Gastrocnemius medialis (tissue), 4 donors: ENCODE measurements at regions of chr14 and their contacts with region 1.

Region 1: GRCh38 chr14:104723648-104724406 is at the start of gene ADSS1:
- DNase-seq: peak; percentile 58 to 79
- ATAC-seq: peak; percentile 38 to 52
- H3K4me3 ChIP-seq: peak within 1 kb of the TSS; percentile 67 to 89 (median 74)
- H3K27ac ChIP-seq: peak within 1 kb of the TSS; percentile 94 to 99 (median 96)
- H3K4me1 ChIP-seq: peaks cover 59 to 70% of the 10 kb centered on the region in 2 donors
- H3K27me3 ChIP-seq: no peaks in the 10 kb centered on the region
- CTCF ChIP-seq: peak; percentile 95 to 100 (median 98)
- POLR2A ChIP-seq: peak; percentile 67 to 83
- total RNA-seq, gene ADSS1: 165 to 577 (median 232) TPM

Region 2: DNA sequence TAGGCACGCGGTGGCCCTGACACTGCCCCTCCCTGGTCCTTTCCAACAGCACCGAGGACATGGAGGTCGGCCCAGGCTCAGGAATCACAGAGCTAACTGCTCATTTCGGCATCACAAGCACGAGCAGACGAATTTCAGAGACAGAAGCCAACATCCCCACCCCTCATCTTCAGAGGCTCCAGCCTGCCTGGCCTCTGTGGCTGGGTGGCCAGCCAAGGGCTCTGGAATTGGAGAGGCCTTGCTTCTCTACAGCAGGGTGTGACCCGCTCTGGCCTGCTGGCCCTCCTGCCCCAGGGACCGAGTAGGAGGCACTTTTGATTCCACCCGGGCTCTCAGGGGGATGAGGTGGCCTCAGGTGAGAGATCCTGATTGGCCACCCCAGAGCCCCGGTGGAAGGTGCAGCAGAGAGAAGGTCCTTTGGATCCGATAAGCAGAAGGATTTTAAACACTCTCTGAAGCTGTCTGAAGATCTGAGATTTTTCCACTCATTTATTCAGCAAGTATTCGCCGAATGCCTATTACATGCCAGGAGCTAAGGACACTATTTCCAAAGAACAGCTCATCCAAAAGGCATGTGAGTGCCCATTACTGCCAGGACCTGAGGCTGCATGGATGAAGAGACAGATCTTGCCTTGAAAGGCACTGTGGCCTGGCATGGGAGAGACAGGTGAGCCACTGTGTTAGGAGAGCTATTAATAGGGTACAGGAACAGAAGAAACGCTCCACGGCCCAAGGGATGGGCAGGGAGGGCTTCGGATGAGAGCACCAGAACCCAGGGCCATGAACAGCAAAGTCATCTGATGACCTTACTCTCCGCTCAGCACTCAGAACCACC is 1171.6 kb before region 1 on chr14:
- in situ Hi-C with region 1: no loop called
- intact Hi-C with region 1: loop called (anchors 10 kb)
- DNase-seq: peak; percentile 55 to 83
- ATAC-seq: peak; percentile 65 to 72
- H3K4me3 ChIP-seq: peak overlapping the region in 1 of 4 donors; percentile 40
- H3K27ac ChIP-seq: peak overlapping the region; percentile 74 to 97 (median 86)
- H3K4me1 ChIP-seq: peaks cover 46 to 74% of the 10 kb centered on the region in 2 donors
- H3K27me3 ChIP-seq: no peaks in the 10 kb centered on the region
- CTCF ChIP-seq: no peak
- POLR2A ChIP-seq: no peak

Region 3: DNA sequence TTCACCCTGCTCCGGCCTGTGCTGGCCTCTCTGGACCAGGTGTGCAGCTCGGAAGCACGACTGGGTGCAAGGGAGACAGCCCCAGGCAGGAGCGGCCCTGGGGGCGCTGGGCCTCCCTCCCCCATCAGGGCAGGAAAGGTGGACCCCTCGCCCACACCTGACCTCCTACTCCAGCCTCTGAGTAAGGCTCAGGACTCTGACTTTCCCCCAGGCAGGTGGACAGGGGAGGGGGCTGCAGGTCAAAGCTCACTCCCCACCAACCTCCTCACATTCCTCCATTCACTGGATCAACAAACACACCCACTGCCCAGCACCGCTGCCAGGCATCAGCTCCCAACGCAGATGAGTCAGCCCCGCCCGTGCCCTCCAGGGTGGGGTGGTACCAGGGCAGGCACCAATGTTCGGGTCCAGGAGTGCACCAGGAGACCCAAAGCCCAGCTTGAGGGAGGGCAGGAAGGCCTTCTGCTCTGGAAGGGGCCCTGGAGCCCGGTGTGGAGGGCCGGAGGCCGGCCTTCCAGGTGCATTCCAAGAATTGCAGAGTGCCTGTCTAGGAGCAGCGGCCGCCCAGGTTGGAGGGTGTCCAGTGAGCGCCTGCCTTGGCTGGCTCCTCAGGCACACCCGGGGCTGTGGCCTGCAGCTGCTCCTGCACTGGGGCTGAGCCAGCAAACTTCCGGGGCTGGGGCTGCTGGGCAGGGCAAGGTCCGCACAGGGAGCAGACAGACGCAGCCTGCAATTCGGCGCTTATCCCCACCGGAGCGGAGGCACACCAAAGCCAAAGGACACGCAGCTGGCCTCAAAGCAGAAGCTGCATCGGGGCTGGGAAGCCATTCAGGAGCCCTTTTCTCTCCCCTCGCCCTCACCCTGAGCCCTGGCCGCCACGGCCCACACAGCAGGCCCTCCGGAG is 36.0 kb before region 1 on chr14:
- in situ Hi-C with region 1: no loop called
- intact Hi-C with region 1: loop called (anchors 1 kb)
- DNase-seq: peak; percentile 88 to 94
- ATAC-seq: peak; percentile 73 to 81
- H3K4me3 ChIP-seq: peak overlapping the region; percentile 54 to 86 (median 64)
- H3K27ac ChIP-seq: peak overlapping the region; percentile 80 to 87 (median 84)
- H3K4me1 ChIP-seq: peaks cover 29 to 36% of the 10 kb centered on the region in 2 donors
- H3K27me3 ChIP-seq: no peaks in the 10 kb centered on the region
- CTCF ChIP-seq: no peak
- POLR2A ChIP-seq: peak; percentile 42 to 53

Region 4: GRCh38 chr14:104735830-104736642 is 12.2 kb after region 1 on chr14:
- in situ Hi-C with region 1: no loop called
- intact Hi-C with region 1: loop called (anchors 1 kb)
- DNase-seq: peak; percentile 96 to 99
- ATAC-seq: peak; percentile 69 to 78
- H3K4me3 ChIP-seq: peak overlapping the region in 1 of 4 donors; percentile 6
- H3K27ac ChIP-seq: peak overlapping the region; percentile 91 to 96 (median 95)
- H3K4me1 ChIP-seq: peaks cover 63 to 65% of the 10 kb centered on the region in 2 donors
- H3K27me3 ChIP-seq: no peaks in the 10 kb centered on the region
- CTCF ChIP-seq: no peak
- POLR2A ChIP-seq: peak; percentile 51 to 77

Region 5: DNA sequence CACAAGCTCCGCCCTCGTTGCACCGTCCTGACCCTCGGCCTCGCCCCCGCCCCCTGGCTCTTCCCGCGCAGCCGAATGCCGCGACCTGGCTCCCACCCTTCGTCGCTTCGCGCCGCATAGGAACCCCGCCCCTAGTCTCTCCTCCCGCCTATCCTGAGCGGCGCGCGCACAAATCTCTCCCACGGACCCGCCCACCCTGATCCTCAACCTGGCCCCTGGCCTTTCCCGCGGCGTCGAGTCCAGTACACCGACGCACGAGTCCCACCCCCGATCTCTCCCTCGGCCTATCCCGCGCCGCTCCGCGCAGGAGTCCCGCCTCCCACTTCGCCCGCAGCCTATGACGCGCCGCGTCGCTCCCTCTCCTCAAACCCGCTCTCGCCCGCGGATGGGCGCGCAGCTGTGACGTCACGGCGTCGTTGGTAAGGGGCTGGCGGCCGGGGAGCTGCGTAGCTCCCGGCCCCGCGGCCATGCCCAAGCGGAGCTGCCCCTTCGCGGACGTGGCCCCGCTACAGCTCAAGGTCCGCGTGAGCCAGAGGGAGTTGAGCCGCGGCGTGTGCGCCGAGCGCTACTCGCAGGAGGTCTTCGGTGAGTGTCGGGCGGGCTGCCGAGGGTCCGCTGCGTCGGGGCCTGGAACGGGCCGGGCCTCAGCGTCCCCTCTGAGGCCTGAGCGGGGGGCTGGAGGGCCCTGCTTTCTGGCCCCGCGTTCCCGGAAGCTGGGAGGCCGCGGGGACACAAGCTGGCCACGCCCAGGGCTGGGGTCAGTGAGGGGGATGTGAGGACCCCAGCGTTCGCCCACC is 29.1 kb after region 1 on chr14 and contains the start of gene SIVA1:
- in situ Hi-C with region 1: no loop called
- intact Hi-C with region 1: loop called (anchors 1 kb)
- DNase-seq: peak; percentile 99
- ATAC-seq: peak; percentile 79 to 84
- H3K4me3 ChIP-seq: peak within 1 kb of the TSS; percentile 84 to 98 (median 92)
- H3K27ac ChIP-seq: peak within 1 kb of the TSS; percentile 90 to 99 (median 94)
- H3K4me1 ChIP-seq: peaks cover 44 to 47% of the 10 kb centered on the region in 2 donors
- H3K27me3 ChIP-seq: no peaks in the 10 kb centered on the region
- CTCF ChIP-seq: peak in 1 of 5 experiments; percentile 33
- POLR2A ChIP-seq: peak; percentile 91 to 95
- total RNA-seq, gene SIVA1: 228 to 357 (median 264) TPM